ENCODE measurements at regions of chr4 and their contacts with region 1.

Region 1: GRCh38 chr4:40837094-40837870 is 87.5 kb downstream of the NSUN7 start:
- DNase-seq: no peak
- CTCF ChIP-seq: no peak

Region 2: DNA sequence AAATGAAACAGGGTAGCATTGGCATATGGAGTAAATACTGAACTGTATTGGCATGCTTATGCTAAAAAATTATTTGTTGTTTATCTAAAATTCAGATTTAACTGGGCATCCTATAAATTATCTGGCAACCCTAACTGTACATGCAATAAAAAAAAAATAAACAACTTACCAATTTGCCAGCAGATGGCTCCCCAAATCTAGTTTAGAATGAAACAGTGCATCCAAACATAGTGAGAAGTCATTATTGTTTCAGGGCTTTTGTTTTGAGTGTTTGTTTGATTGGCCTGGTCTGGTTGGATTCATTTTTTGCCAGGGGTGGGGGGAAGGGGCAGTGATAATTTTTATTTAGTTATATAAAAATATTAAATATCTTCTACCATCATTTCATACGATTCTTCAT is 100.4 kb before region 1 on chr4:
- in situ Hi-C with region 1: loop called (anchors 5 kb)
- DNase-seq: peak; percentile 56
- CTCF ChIP-seq: peak; percentile 53

Region 3: GRCh38 chr4:40992472-40993295 is 155.4 kb after region 1 on chr4:
- in situ Hi-C with region 1: no loop called
- DNase-seq: peak; percentile 38
- CTCF ChIP-seq: no peak

Region 4: DNA sequence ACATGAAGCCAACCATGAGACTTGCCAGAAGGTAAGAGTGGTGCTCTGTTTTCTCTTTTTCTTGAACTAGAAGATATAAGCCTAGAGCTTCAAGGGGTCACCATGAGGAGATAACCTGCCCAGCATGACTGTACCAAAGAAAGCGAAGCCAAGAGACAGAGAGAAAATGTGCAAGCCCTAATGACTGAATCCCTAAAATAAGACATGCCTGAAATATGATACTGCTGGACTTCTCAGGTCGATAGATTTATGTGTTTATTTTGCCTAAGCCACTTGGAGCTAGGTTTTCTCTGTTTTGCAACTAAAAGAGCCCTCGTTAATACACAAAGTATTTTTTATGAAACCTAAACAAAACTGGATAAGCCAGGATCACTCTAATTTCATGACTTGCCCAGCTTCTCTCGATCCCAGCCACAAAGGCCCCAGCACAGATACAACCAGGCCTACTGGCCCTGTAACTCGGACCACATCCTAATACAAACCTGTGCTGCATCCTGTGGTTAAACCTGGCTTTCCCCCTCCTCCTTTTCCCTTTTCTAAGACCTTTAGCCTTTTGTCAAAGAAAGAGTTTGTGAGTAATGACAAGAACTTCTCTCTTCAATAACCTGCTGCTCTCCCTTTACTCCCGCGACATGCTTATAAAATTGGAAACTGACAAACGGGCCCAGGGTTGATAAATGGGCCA is 191.3 kb after region 1 on chr4:
- in situ Hi-C with region 1: no loop called
- DNase-seq: no peak
- CTCF ChIP-seq: no peak